Activated CD4-positive, alpha-beta T cell treated with anti-CD3 and anti-CD28 coated beads for 36 hours (primary cell): ENCODE measurements at regions of chr5 and their contacts with region 1.

Region 1: DNA sequence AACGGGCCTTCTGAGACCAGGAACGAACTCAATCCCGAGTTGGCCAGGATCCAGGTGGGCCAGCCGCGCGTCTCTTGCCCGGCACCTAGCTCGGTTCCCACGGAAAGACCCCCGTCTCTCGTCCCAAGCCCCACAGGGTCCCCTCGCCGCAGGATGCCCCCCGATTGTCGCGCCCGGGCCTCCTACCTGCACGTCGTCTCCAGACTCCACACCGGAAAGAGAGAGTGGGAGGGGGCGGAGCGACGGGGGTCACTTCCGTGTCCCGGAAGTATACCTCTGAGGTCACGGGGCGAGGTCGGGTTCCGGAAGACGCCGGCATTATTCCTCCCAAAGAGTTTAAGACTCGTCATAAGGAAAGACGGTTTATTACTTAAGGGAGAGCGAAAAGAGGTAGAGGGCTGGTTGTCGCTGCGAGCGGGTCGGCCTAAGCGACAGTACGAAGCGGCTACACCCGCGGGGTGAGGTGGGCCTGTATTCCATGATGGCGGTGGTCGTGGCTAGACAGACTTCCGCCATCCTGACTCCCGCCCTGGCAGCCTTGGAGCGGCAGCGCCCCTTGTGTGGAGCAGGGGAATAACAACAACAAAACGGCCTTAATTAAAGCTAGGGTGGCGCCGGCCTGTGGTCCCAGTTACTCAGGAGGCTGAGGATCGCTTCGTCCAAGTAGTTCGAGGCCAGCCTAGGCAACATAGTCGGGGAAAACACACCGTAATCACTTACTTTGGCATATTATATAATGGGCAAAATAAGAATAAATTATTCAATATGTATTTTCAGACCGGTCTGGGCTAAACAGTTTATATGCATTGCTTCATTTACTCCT is at the start of gene RPS14:
- DNase-seq: peak; percentile 96
- ATAC-seq: peak; percentile 93
- H3K4me3 Mint-ChIP-seq: peak within 1 kb of the TSS; percentile 95
- H3K27ac Mint-ChIP-seq: peak within 1 kb of the TSS; percentile 99
- H3K4me1 Mint-ChIP-seq: peaks cover 31% of the 10 kb centered on the region
- H3K27me3 Mint-ChIP-seq: no peaks in the 10 kb centered on the region
- total RNA-seq, gene RPS14: 2,270 to 3,312 TPM

Region 2: GRCh38 chr5:149268928-149269557 is 1180.7 kb before region 1 on chr5:
- CTCF ChIA-PET with region 1: no interaction called
- POLR2A ChIA-PET with region 1: no interaction called
- intact Hi-C with region 1: no loop called
- DNase-seq: no peak
- ATAC-seq: peak; percentile 45
- H3K4me3 Mint-ChIP-seq: no peak overlapping the region
- H3K27ac Mint-ChIP-seq: no peak overlapping the region
- H3K4me1 Mint-ChIP-seq: peaks cover 13% of the 10 kb centered on the region
- H3K27me3 Mint-ChIP-seq: peaks cover 23% of the 10 kb centered on the region

Region 3: DNA sequence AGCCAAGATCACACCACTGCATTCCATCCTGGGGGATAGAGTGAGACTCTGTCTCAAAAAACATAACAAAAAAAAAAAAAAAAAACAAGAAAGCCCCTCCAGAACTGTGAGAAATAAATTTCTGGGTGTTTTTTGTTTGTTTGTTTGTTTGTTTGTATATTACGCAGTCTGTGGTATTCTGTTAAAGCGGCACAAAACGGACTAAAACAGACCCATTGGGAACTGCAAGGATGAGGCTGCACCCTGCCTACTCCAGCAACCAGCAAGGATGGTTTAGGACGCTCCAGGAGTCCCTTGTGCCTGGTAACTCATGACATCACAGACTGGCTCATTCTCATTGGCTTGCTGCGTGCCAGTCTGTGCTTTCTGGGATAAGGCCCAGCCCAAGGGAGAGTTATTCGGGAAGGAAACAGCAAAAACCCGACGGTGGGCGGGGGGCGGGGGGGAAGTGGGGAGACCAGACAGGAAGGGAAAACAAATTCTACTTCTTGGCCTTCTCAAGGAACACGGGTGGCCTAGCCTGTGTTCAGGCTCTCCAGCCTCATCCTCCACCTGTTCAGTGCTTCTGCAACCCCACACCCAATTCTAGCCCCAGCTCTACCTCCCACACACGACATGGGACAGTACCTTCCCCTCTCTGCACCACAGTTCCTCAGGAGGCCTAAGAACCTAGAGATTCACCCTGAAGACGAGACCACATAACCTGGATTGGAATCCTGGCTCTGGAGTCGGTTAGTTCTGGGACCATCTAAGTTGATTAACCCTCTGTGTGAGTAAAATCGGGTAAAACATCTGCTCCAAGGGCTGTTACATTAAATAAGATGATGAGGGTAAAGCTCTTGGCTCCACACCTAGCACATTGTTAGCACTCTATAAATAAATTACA is 39.8 kb before region 1 on chr5:
- CTCF ChIA-PET with region 1: interaction called, 8 read pairs
- POLR2A ChIA-PET with region 1: interaction called, 10 read pairs
- intact Hi-C with region 1: loop called (anchors 1 kb)
- DNase-seq: peak; percentile 66
- ATAC-seq: peak; percentile 40
- H3K4me3 Mint-ChIP-seq: peak overlapping the region; percentile 99
- H3K27ac Mint-ChIP-seq: peak overlapping the region; percentile 99
- H3K4me1 Mint-ChIP-seq: peaks cover 36% of the 10 kb centered on the region
- H3K27me3 Mint-ChIP-seq: no peaks in the 10 kb centered on the region

Region 4: GRCh38 chr5:150553402-150553801 is 103.7 kb after region 1 on chr5:
- CTCF ChIA-PET with region 1: no interaction called
- POLR2A ChIA-PET with region 1: no interaction called
- intact Hi-C with region 1: no loop called
- DNase-seq: no peak
- ATAC-seq: no peak
- H3K4me3 Mint-ChIP-seq: no peak overlapping the region
- H3K27ac Mint-ChIP-seq: no peak overlapping the region
- H3K4me1 Mint-ChIP-seq: no peaks in the 10 kb centered on the region
- H3K27me3 Mint-ChIP-seq: no peaks in the 10 kb centered on the region

Region 5: DNA sequence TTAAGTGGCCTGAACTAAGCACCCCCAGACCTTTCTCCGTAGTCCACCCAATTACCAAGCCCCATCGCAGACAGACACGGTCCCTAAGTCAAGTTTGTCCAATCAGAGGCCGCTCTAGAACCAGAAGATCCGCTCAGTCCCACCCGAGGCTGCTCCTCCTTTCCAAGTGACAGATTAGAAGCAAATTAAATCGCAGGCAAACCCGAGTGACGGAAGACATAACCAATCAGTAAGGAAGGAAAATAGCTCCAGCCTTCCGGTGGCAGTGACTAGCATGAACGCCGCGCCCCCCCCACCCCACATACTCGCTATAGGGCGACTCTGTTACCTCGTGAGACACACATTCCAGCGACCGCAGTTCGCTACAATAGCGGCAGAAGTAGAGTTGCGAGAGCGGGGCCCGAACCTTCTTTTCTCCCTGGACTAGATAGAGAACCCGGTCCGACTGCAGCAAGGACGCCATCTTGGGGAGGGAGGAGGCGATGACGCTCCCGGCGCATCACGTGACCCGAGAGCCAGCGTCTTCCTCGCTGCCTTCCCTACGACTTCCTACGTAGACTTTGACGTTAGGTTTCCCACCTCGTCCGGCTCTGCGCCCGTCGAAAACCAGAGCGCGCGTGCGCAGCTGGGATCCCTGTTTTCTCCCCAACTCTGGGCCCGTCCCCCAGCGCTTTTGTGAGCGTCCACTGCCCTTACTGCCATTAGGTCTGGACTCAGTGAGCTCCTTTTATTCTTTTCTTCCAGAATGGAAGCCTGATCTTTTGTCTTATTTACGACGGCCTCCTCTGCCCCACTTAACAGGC is 309.0 kb after region 1 on chr5 and contains the start of gene DCTN4:
- CTCF ChIA-PET with region 1: interaction called, 5 read pairs
- POLR2A ChIA-PET with region 1: interaction called, 3 read pairs
- intact Hi-C with region 1: loop called in 1 of 2 experiments (anchors 1 kb)
- DNase-seq: peak; percentile 96
- ATAC-seq: peak; percentile 96
- H3K4me3 Mint-ChIP-seq: no peak within 1 kb of the TSS
- H3K27ac Mint-ChIP-seq: no peak within 1 kb of the TSS
- H3K4me1 Mint-ChIP-seq: peaks cover 37% of the 10 kb centered on the region
- H3K27me3 Mint-ChIP-seq: no peaks in the 10 kb centered on the region
- total RNA-seq, gene DCTN4: 31.7 to 49.0 TPM